CD4-positive, alpha-beta memory T cell (primary cell): ENCODE measurements at regions of chr10 and their contacts with region 1.

Region 1: DNA sequence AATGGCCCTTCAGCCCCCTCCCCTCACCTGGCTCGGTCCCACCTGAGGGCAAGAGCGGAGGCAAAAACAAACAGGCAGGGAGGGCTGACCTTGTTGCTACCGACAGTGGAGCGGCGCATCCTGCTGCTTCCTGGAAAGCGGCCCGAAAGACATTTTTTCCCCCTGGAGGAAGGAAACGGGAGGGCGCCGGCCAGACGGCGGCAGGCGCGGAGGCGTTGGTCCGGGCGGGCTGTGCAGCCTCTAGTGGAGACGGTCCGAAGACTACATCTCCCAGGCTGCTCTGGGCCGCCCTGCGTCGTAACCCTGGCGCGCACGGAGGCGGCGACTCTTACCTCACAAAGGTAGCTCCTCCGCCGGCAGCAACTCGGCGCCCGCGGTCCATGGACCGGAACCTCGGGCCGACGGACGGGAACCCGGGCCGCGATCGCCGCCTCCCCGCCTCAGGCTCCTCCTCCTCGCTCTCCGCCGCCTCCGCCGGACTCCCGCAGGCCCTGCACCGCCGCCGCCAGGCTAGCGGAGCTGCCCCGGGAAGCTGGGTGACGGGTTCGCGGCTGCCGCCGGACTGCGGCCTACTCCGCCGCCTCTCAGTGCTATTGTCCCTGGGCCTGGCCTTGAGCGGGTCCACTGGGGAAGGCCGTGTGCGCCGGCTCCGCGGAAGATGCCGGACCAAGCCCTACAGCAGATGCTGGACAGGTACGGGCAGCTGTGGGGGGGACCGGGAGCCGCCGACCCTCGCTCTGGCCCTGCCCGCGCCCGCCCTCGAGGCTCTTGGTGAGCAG is at the starts of genes CPEB3 and MARCHF5:
- DNase-seq: peak; percentile 87 to 94 (median 89)
- H3K4me3 ChIP-seq: peak within 1 kb of the TSS; percentile 85 to 87
- H3K4me3 Mint-ChIP-seq: peak within 1 kb of the TSS; percentile 89 to 98 (median 96)
- H3K27ac ChIP-seq: peak within 1 kb of the TSS; percentile 90
- H3K27ac Mint-ChIP-seq: peak within 1 kb of the TSS; percentile 86 to 94 (median 91)
- H3K4me1 ChIP-seq: peaks cover 26% of the 10 kb centered on the region
- H3K4me1 Mint-ChIP-seq: peaks cover 18 to 39% (median 29%) of the 10 kb centered on the region in 4 donors
- H3K27me3 ChIP-seq: no peaks in the 10 kb centered on the region
- H3K27me3 Mint-ChIP-seq: no peaks in the 10 kb centered on the region
- total RNA-seq, gene CPEB3: 3.4 to 3.8 TPM
- total RNA-seq, gene MARCHF5: 38.6 to 40.8 TPM

Region 2: DNA sequence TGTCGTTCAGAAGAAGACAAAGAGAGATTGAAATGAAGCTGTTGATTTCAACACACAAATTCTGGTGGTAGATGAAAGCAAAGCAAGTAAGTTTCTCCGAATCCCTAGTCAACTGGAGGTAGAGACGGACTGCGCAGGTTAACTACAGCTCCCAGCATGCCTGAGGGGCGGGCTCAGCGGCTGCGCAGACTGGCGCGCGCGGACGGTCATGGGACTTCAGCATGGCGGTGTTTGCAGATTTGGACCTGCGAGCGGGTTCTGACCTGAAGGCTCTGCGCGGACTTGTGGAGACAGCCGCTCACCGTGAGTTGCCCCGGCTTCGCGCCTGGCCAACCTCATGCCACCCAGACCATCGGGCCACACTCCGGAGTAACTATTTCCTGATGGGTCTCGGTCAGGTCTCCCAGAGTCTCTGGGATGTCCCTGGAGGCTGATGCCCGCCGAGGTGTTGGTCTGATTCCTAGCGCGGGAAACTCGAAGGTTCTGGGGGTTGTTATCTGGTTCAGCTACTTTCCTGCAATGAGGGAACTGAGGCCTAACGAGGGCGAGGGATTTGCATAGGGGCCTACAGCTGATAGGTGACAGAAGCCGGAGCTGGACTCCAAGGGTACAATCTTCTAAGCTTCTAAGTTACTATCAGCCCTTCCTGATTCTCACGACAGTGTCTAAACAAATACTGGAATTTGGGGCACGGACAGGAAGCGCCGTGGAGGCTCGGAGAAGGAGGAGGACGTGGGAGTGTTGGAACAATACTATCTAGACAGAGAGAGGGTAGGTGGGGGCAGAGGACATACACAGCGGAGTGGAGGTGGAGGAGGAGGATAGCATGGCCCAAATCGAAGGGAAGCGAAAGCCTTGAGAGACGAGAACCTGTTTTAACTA is 1419.0 kb before region 1 on chr10 and contains the start of gene RPP30:
- CTCF ChIA-PET with region 1: no interaction called
- POLR2A ChIA-PET with region 1: no interaction called
- intact Hi-C with region 1: loop called (anchors 2 kb)
- DNase-seq: peak; percentile 78 to 81 (median 79)
- H3K4me3 ChIP-seq: peak within 1 kb of the TSS; percentile 80 to 91
- H3K4me3 Mint-ChIP-seq: peak within 1 kb of the TSS; percentile 97 to 100 (median 98)
- H3K27ac ChIP-seq: peak within 1 kb of the TSS; percentile 65
- H3K27ac Mint-ChIP-seq: peak within 1 kb of the TSS; percentile 81 to 96 (median 95)
- H3K4me1 ChIP-seq: peaks cover 30% of the 10 kb centered on the region
- H3K4me1 Mint-ChIP-seq: peaks cover 21 to 41% (median 32%) of the 10 kb centered on the region in 4 donors
- H3K27me3 ChIP-seq: no peaks in the 10 kb centered on the region
- H3K27me3 Mint-ChIP-seq: peaks cover 13 to 18% of the 10 kb centered on the region in 2 donors
- total RNA-seq, gene RPP30: 32.3 to 33.2 TPM

Region 3: GRCh38 chr10:91923371-91924211 is 367.4 kb before region 1 on chr10 and contains the start of gene BTAF1:
- CTCF ChIA-PET with region 1: interaction called, 3 read pairs
- POLR2A ChIA-PET with region 1: interaction called, 11 read pairs
- intact Hi-C with region 1: no loop called
- DNase-seq: peak; percentile 89 to 93 (median 92)
- H3K4me3 ChIP-seq: peak within 1 kb of the TSS; percentile 79 to 87
- H3K4me3 Mint-ChIP-seq: peak within 1 kb of the TSS; percentile 90 to 99 (median 94)
- H3K27ac ChIP-seq: peak within 1 kb of the TSS; percentile 91
- H3K27ac Mint-ChIP-seq: peak within 1 kb of the TSS; percentile 96 to 100 (median 99)
- H3K4me1 ChIP-seq: peaks cover 50% of the 10 kb centered on the region
- H3K4me1 Mint-ChIP-seq: peaks cover 29 to 50% (median 38%) of the 10 kb centered on the region in 4 donors
- H3K27me3 ChIP-seq: no peaks in the 10 kb centered on the region
- H3K27me3 Mint-ChIP-seq: peaks cover 2% of the 10 kb centered on the region in 2 donors
- total RNA-seq, gene BTAF1: 69.1 to 76.9 TPM

Region 4: GRCh38 chr10:92208736-92209327 is 82.2 kb before region 1 on chr10:
- CTCF ChIA-PET with region 1: interaction called, 9 read pairs
- POLR2A ChIA-PET with region 1: interaction called, 9 read pairs
- intact Hi-C with region 1: loop called (anchors 5 kb)
- DNase-seq: no peak
- H3K4me3 ChIP-seq: no peak overlapping the region
- H3K4me3 Mint-ChIP-seq: no peak overlapping the region
- H3K27ac ChIP-seq: no peak overlapping the region
- H3K27ac Mint-ChIP-seq: no peak overlapping the region
- H3K4me1 ChIP-seq: peaks cover 5% of the 10 kb centered on the region
- H3K4me1 Mint-ChIP-seq: peaks cover 6 to 11% (median 9%) of the 10 kb centered on the region in 4 donors
- H3K27me3 ChIP-seq: no peaks in the 10 kb centered on the region
- H3K27me3 Mint-ChIP-seq: no peaks in the 10 kb centered on the region

Region 5: GRCh38 chr10:92486637-92487036 is 195.6 kb after region 1 on chr10:
- CTCF ChIA-PET with region 1: no interaction called
- POLR2A ChIA-PET with region 1: no interaction called
- intact Hi-C with region 1: no loop called
- DNase-seq: no peak
- H3K4me3 ChIP-seq: no peak overlapping the region
- H3K4me3 Mint-ChIP-seq: no peak overlapping the region
- H3K27ac ChIP-seq: no peak overlapping the region
- H3K27ac Mint-ChIP-seq: no peak overlapping the region
- H3K4me1 ChIP-seq: no peaks in the 10 kb centered on the region
- H3K4me1 Mint-ChIP-seq: no peaks in the 10 kb centered on the region
- H3K27me3 ChIP-seq: no peaks in the 10 kb centered on the region
- H3K27me3 Mint-ChIP-seq: no peaks in the 10 kb centered on the region

Region 6: GRCh38 chr10:92573798-92574547 is 282.9 kb after region 1 on chr10 and contains the start of gene IDE:
- CTCF ChIA-PET with region 1: interaction called, 9 read pairs
- POLR2A ChIA-PET with region 1: interaction called, 11 read pairs
- intact Hi-C with region 1: loop called (anchors 1 kb)
- DNase-seq: peak; percentile 77 to 83 (median 81)
- H3K4me3 ChIP-seq: peak within 1 kb of the TSS; percentile 50 to 86
- H3K4me3 Mint-ChIP-seq: peak within 1 kb of the TSS; percentile 88 to 95 (median 92)
- H3K27ac ChIP-seq: peak within 1 kb of the TSS; percentile 85
- H3K27ac Mint-ChIP-seq: peak within 1 kb of the TSS; percentile 90 to 96 (median 93)
- H3K4me1 ChIP-seq: peaks cover 26% of the 10 kb centered on the region
- H3K4me1 Mint-ChIP-seq: peaks cover 27 to 46% (median 36%) of the 10 kb centered on the region in 4 donors
- H3K27me3 ChIP-seq: no peaks in the 10 kb centered on the region
- H3K27me3 Mint-ChIP-seq: no peaks in the 10 kb centered on the region
- total RNA-seq, gene IDE: 38.4 to 40.2 TPM

Region 7: GRCh38 chr10:92901819-92902251 is 610.8 kb after region 1 on chr10:
- CTCF ChIA-PET with region 1: no interaction called
- POLR2A ChIA-PET with region 1: no interaction called
- intact Hi-C with region 1: no loop called
- DNase-seq: peak; percentile 79 to 88 (median 83)
- H3K4me3 ChIP-seq: peak overlapping the region in 1 of 2 donors; percentile 56
- H3K4me3 Mint-ChIP-seq: peak overlapping the region; percentile 78 to 94 (median 88)
- H3K27ac ChIP-seq: no peak overlapping the region
- H3K27ac Mint-ChIP-seq: peak overlapping the region; percentile 85 to 97 (median 91)
- H3K4me1 ChIP-seq: peaks cover 20% of the 10 kb centered on the region
- H3K4me1 Mint-ChIP-seq: peaks cover 15 to 22% (median 18%) of the 10 kb centered on the region in 4 donors
- H3K27me3 ChIP-seq: no peaks in the 10 kb centered on the region
- H3K27me3 Mint-ChIP-seq: no peaks in the 10 kb centered on the region

Region 8: DNA sequence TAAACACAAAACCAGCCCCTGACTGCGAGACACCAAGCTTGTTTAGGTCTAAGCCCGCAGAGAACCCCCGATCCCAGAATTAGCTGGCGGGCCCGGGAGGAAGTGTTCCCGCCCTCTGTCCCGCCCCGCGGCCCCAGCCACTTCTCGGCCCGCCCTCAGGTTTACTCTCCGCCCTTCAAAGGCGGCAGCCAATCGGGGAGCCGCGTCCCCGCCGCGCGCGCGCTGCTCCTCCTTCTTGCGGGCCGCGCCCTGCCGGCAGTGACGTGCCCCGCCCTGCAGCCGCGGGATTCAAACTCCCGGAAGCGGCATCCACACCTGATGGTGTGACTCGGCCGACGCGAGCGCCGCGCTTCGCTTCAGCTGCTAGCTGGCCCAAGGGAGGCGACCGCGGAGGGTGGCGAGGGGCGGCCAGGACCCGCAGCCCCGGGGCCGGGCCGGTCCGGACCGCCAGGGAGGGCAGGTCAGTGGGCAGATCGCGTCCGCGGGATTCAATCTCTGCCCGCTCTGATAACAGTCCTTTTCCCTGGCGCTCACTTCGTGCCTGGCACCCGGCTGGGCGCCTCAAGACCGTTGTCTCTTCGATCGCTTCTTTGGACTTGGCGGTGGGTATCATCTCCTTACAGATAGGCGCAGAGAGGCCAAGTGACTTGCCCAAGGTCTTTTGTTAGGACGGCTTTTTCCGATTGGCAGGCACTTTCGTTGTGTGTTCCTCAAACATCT is 1205.5 kb after region 1 on chr10 and contains the start of gene CEP55:
- CTCF ChIA-PET with region 1: no interaction called
- POLR2A ChIA-PET with region 1: no interaction called
- intact Hi-C with region 1: loop called (anchors 5 kb)
- DNase-seq: peak; percentile 93 to 97 (median 94)
- H3K4me3 ChIP-seq: peak within 1 kb of the TSS; percentile 83 to 94
- H3K4me3 Mint-ChIP-seq: peak within 1 kb of the TSS; percentile 92 to 95 (median 93)
- H3K27ac ChIP-seq: peak within 1 kb of the TSS; percentile 37
- H3K27ac Mint-ChIP-seq: peak within 1 kb of the TSS; percentile 54 to 92 (median 89)
- H3K4me1 ChIP-seq: peaks cover 23% of the 10 kb centered on the region
- H3K4me1 Mint-ChIP-seq: peaks cover 13 to 23% (median 19%) of the 10 kb centered on the region in 4 donors
- H3K27me3 ChIP-seq: no peaks in the 10 kb centered on the region
- H3K27me3 Mint-ChIP-seq: no peaks in the 10 kb centered on the region
- total RNA-seq, gene CEP55: 0.17 to 0.30 TPM